Activated CD4-positive, alpha-beta memory T cell treated with anti-CD3 and anti-CD28 coated beads, Interleukin-2, amount 10 ng/mL, durations not matched to agents 7 days and 5 days (primary cell): ENCODE measurements at regions of chr1 and their contacts with region 1.

Region 1: DNA sequence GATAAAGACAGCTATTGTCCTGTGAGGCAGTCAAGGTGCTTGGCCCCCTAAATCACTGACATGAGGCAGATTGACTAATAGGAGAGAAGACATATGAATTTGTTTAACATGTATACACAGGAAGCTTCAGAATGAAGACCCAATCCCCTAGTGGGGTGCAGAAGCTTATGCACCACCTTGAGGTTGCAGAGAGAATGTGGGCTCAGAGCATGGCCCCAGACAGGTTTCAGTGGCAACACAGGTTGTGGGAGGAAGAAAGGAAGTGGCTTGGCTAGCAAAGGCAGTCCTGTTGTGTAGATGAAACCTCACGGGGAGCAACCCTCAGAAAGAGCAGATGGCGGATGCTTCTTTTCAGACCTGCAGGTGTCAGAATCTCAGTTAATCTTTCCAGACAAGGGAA is 37.0 kb upstream of the PARP1 start:
- DNase-seq: peak; percentile 83
- H3K4me3 Mint-ChIP-seq: no peak overlapping the region
- H3K27ac Mint-ChIP-seq: peak overlapping the region; percentile 27
- H3K4me1 Mint-ChIP-seq: peaks cover 31% of the 10 kb centered on the region
- H3K27me3 Mint-ChIP-seq: peaks cover 21% of the 10 kb centered on the region

Region 2: GRCh38 chr1:226457307-226457712 is 12.4 kb after region 1 on chr1:
- CTCF ChIA-PET with region 1: interaction called, 32 read pairs
- POLR2A ChIA-PET with region 1: interaction called, 3 read pairs
- DNase-seq: peak; percentile 50
- H3K4me3 Mint-ChIP-seq: peak overlapping the region; percentile 33
- H3K27ac Mint-ChIP-seq: peak overlapping the region; percentile 52
- H3K4me1 Mint-ChIP-seq: peaks cover 11% of the 10 kb centered on the region
- H3K27me3 Mint-ChIP-seq: peaks cover 8% of the 10 kb centered on the region